ENCODE measurements at regions of chr1 and their contacts with region 1.

Region 1: GRCh38 chr1:51627678-51628077 is 10.8 kb downstream of the OSBPL9 start:
- DNase-seq: peak; percentile 52
- H3K4me3 ChIP-seq: no peak overlapping the region
- H3K27ac ChIP-seq: no peak overlapping the region
- H3K4me1 ChIP-seq: peaks cover 9% of the 10 kb centered on the region
- H3K27me3 ChIP-seq: no peaks in the 10 kb centered on the region
- CTCF ChIP-seq: peak; percentile 36 to 63

Region 2: DNA sequence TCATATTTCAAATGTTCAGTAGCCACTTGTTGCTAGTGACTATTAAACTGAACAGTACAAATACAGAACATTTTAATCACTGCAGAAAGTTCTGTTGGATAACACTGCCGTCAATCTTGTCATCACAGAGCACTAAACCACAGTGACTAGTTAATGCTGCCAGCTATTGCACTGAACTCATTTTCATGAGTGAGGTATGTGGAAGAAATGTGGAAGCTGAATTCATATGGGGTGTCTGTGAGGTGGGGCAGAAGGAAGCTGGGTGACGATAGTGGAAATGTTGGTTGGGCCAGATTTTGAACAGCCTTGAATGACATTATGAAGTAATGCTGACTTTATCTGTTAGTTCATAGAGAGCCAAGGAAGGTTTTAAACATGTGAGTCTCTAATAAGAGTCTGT is 38.8 kb after region 1 on chr1:
- CTCF ChIA-PET with region 1: no interaction called
- dilution Hi-C with region 1: no loop called
- in situ Hi-C with region 1: no loop called
- intact Hi-C with region 1: no loop called
- DNase-seq: no peak
- H3K4me3 ChIP-seq: no peak overlapping the region
- H3K27ac ChIP-seq: no peak overlapping the region
- H3K4me1 ChIP-seq: peaks cover 4% of the 10 kb centered on the region
- H3K27me3 ChIP-seq: no peaks in the 10 kb centered on the region
- CTCF ChIP-seq: no peak

Region 3: GRCh38 chr1:51719146-51719545 is 91.5 kb after region 1 on chr1:
- CTCF ChIA-PET with region 1: no interaction called
- dilution Hi-C with region 1: no loop called
- in situ Hi-C with region 1: no loop called
- intact Hi-C with region 1: no loop called
- DNase-seq: no peak
- H3K4me3 ChIP-seq: no peak overlapping the region
- H3K27ac ChIP-seq: no peak overlapping the region
- H3K4me1 ChIP-seq: no peaks in the 10 kb centered on the region
- H3K27me3 ChIP-seq: no peaks in the 10 kb centered on the region
- CTCF ChIP-seq: no peak

Region 4: DNA sequence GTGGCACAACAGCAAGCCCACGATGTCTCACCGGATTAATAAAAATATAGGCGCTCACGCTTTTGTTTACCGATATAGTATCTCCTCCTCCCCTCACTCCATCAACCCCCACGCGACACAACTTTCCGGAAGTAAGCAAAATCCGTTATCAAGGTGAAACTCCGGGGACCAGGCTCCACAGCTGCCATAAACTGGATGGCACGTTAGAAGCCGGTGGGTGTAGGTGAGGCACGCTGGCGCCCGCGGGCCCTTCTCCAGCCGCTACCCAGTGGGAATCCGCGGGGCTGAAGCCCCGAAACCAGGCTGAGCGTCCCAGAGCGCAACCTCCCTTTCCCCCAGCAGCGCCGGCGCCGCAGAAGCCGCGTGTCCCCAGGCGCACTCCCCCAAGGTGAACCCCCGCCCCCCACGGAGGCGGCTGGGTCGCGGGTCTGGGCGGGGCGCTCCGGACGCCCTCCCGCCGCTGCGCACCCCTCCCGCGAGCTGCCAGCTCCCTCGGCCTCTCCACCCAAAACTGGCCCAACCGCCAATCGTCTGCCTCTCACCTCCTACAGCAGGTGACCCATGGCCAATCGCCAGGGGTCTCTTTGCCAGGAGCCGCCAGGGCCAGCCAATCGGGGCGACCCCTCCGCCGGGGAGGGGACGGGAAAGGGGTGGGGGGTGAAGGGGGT is 101.6 kb after region 1 on chr1:
- CTCF ChIA-PET with region 1: no interaction called
- dilution Hi-C with region 1: no loop called
- in situ Hi-C with region 1: no loop called
- intact Hi-C with region 1: loop called (anchors 2 kb)
- DNase-seq: peak; percentile 95
- H3K4me3 ChIP-seq: peak overlapping the region; percentile 84 to 97 (median 87)
- H3K27ac ChIP-seq: peak overlapping the region; percentile 70
- H3K4me1 ChIP-seq: peaks cover 9% of the 10 kb centered on the region
- H3K27me3 ChIP-seq: no peaks in the 10 kb centered on the region
- CTCF ChIP-seq: no peak

Region 5: GRCh38 chr1:51768971-51769588 is 141.4 kb after region 1 on chr1:
- CTCF ChIA-PET with region 1: interaction called, 3 read pairs
- dilution Hi-C with region 1: no loop called
- in situ Hi-C with region 1: loop called (anchors 10 kb)
- intact Hi-C with region 1: loop called (anchors 1 kb)
- DNase-seq: peak; percentile 37
- H3K4me3 ChIP-seq: no peak overlapping the region
- H3K27ac ChIP-seq: no peak overlapping the region
- H3K4me1 ChIP-seq: no peaks in the 10 kb centered on the region
- H3K27me3 ChIP-seq: no peaks in the 10 kb centered on the region
- CTCF ChIP-seq: peak; percentile 73 to 78

Region 6: GRCh38 chr1:51776408-51776807 is 148.7 kb after region 1 on chr1:
- CTCF ChIA-PET with region 1: no interaction called
- dilution Hi-C with region 1: no loop called
- in situ Hi-C with region 1: loop called in 1 of 2 experiments (anchors 10 kb)
- intact Hi-C with region 1: no loop called
- DNase-seq: no peak
- H3K4me3 ChIP-seq: no peak overlapping the region
- H3K27ac ChIP-seq: no peak overlapping the region
- H3K4me1 ChIP-seq: no peaks in the 10 kb centered on the region
- H3K27me3 ChIP-seq: no peaks in the 10 kb centered on the region
- CTCF ChIP-seq: no peak